ENCODE measurements at regions of chr19 and their contacts with region 1.

Region 1: GRCh38 chr19:40777937-40778705 is at the start of gene RAB4B:
- DNase-seq: peak; percentile 100
- H3K4me3 Mint-ChIP-seq: peak within 1 kb of the TSS; percentile 91
- H3K27ac Mint-ChIP-seq: peak within 1 kb of the TSS; percentile 89
- H3K4me1 Mint-ChIP-seq: peaks cover 51% of the 10 kb centered on the region
- H3K27me3 Mint-ChIP-seq: peaks cover 2% of the 10 kb centered on the region
- total RNA-seq, gene RAB4B: 40.6 and 45.5 TPM in 2 replicates

Region 2: DNA sequence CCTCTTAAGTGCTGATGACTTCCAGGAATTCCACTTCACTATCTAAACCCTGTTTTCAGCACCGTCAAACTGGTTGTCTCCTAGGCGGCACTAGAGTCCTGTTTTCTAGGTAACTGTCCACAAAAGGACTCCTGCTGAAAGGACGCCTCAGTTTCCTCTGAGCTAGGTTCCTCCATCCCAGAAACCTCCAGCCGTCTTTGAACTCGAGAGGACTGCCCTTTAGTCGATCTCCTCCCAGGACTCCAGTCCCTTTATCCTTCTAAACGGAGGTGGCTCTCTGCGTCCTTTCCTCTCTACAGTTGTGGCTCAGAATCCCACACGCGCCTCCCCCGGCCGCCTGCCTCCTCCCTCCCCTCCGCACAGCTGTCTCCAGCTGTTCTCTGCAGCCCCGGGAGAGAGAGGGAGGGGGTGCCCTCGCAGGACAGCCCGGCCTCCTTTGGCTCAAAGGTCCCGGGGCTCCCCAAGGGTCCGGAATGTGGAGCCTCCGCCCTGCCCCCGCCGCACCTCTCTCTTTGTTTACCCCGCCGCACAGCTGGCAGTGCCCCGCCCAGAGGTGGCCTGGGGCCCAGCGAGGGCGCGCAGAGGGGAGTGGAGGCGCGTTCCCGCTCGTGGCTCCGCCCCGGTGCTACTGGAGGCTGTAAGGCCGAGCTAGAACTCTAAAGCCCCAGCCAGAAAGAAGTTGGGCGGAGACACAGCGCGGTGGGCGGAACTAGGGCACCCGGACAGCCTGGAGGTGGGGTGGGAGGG is 174.6 kb before region 1 on chr19:
- intact Hi-C with region 1: loop called (anchors 2 kb)
- DNase-seq: peak; percentile 97
- H3K4me3 Mint-ChIP-seq: peak overlapping the region; percentile 86
- H3K27ac Mint-ChIP-seq: peak overlapping the region; percentile 87
- H3K4me1 Mint-ChIP-seq: peaks cover 58% of the 10 kb centered on the region
- H3K27me3 Mint-ChIP-seq: peaks cover 26% of the 10 kb centered on the region

Region 3: GRCh38 chr19:40690693-40691420 is 87.3 kb before region 1 on chr19:
- intact Hi-C with region 1: loop called (anchors 1 kb)
- DNase-seq: peak; percentile 80
- H3K4me3 Mint-ChIP-seq: peak overlapping the region; percentile 87
- H3K27ac Mint-ChIP-seq: peak overlapping the region; percentile 84
- H3K4me1 Mint-ChIP-seq: no peaks in the 10 kb centered on the region
- H3K27me3 Mint-ChIP-seq: no peaks in the 10 kb centered on the region

Region 4: DNA sequence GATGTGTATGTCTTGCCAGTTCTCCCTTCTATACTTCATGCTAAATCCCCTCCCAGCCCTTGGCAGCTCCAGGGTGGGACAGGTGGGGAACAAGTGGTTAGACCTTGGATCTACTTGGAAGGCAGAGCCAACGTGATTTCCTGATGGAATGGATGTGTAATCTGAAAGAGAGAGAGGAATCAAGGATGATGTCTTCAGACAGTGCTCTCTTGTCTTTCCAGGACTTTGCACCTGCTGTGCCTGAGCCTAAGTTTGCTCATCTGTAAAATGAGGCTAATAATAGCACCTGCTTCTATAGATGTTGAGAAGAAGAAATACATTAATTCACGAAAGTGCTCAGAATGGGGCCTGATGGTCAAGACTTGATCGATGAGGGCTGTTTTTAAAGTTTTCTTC is 13.9 kb after region 1 on chr19:
- intact Hi-C with region 1: loop called (anchors 1 kb)
- DNase-seq: no peak
- H3K4me3 Mint-ChIP-seq: no peak overlapping the region
- H3K27ac Mint-ChIP-seq: peak overlapping the region; percentile 73
- H3K4me1 Mint-ChIP-seq: peaks cover 17% of the 10 kb centered on the region
- H3K27me3 Mint-ChIP-seq: no peaks in the 10 kb centered on the region

Region 5: GRCh38 chr19:40822161-40822560 is 44.0 kb after region 1 on chr19:
- intact Hi-C with region 1: loop called (anchors 1 kb)
- DNase-seq: no peak
- H3K4me3 Mint-ChIP-seq: no peak overlapping the region
- H3K27ac Mint-ChIP-seq: no peak overlapping the region
- H3K4me1 Mint-ChIP-seq: peaks cover 24% of the 10 kb centered on the region
- H3K27me3 Mint-ChIP-seq: no peaks in the 10 kb centered on the region

Region 6: DNA sequence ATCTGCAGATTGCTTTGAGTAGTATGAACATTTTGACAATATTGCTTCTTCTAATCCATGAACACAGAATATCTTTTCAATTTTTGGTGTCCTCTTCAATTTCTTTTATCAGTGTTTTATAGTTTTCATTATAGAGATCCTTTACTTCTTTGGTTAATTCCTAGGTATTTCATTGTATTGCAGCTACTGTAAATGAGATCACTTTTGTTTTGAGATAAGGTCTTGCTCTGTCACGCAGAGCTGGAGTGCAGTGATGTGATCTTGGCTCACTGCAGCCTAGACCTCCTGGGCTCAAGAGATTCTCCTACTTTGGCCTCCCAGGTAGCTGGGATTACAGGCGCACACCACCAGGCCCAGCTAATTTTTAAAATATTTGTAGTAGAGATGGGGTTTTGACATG is 94.1 kb after region 1 on chr19:
- intact Hi-C with region 1: no loop called
- DNase-seq: no peak
- H3K4me3 Mint-ChIP-seq: no peak overlapping the region
- H3K27ac Mint-ChIP-seq: no peak overlapping the region
- H3K4me1 Mint-ChIP-seq: peaks cover 14% of the 10 kb centered on the region
- H3K27me3 Mint-ChIP-seq: peaks cover 28% of the 10 kb centered on the region